GM12878 (cell line): ENCODE measurements at regions of chr1 and their contacts with region 1.

Region 1: GRCh38 chr1:78145105-78145580 is 99.4 kb downstream of the GIPC2 start:
- DNase-seq: no peak
- ATAC-seq: peak; percentile 85
- H3K4me3 ChIP-seq: no peak overlapping the region
- H3K27ac ChIP-seq: no peak overlapping the region
- H3K4me1 ChIP-seq: peaks cover 16% of the 10 kb centered on the region
- H3K27me3 ChIP-seq: no peaks in the 10 kb centered on the region
- CTCF ChIP-seq: peak; percentile 83 to 88 (median 87)
- EP300 ChIP-seq: no peak
- POLR2A ChIP-seq: no peak
- RAD21 ChIP-seq: peak; percentile 85

Region 2: DNA sequence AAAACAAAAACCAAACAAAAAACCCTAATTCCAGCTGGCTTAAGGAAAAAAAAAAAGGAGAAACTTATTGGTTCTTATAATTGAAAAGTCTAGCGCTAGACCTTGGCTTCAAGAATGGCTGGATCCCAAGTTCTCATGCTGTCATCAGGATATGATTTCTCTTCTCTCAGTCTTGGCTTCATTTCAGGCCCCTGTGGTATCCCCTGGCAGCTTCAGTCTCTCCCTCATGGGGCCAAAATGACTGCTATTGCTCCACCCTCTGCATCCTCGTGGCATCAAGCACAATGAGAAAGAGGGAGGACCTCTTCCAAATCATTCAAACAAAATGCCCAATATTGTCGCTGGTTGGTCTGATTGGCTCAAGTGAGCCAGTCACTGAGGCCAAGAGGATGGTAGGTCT is 18.6 kb before region 1 on chr1:
- CTCF ChIA-PET with region 1: interaction called, 112 read pairs
- POLR2A ChIA-PET with region 1: no interaction called
- RAD21 ChIA-PET with region 1: interaction called, 25 read pairs
- SMC1A ChIA-PET with region 1: interaction called, 37 read pairs
- in situ Hi-C with region 1: no loop called
- intact Hi-C with region 1: no loop called
- DNase-seq: no peak
- ATAC-seq: no peak
- H3K4me3 ChIP-seq: no peak overlapping the region
- H3K27ac ChIP-seq: no peak overlapping the region
- H3K4me1 ChIP-seq: no peaks in the 10 kb centered on the region
- H3K27me3 ChIP-seq: no peaks in the 10 kb centered on the region
- CTCF ChIP-seq: no peak
- EP300 ChIP-seq: no peak
- POLR2A ChIP-seq: no peak
- RAD21 ChIP-seq: no peak

Region 3: GRCh38 chr1:78156805-78157521 is 11.8 kb after region 1 on chr1:
- CTCF ChIA-PET with region 1: interaction called, 10 read pairs
- POLR2A ChIA-PET with region 1: interaction called, 3 read pairs
- RAD21 ChIA-PET with region 1: interaction called, 6 read pairs
- SMC1A ChIA-PET with region 1: interaction called, 3 read pairs
- in situ Hi-C with region 1: no loop called
- intact Hi-C with region 1: no loop called
- DNase-seq: no peak
- ATAC-seq: no peak
- H3K4me3 ChIP-seq: no peak overlapping the region
- H3K27ac ChIP-seq: no peak overlapping the region
- H3K4me1 ChIP-seq: no peaks in the 10 kb centered on the region
- H3K27me3 ChIP-seq: no peaks in the 10 kb centered on the region
- CTCF ChIP-seq: no peak
- EP300 ChIP-seq: no peak
- POLR2A ChIP-seq: no peak
- RAD21 ChIP-seq: no peak

Region 4: GRCh38 chr1:78601068-78601467 is 455.9 kb after region 1 on chr1:
- CTCF ChIA-PET with region 1: interaction called, 53 read pairs
- POLR2A ChIA-PET with region 1: no interaction called
- RAD21 ChIA-PET with region 1: interaction called, 12 read pairs
- SMC1A ChIA-PET with region 1: interaction called, 23 read pairs
- in situ Hi-C with region 1: no loop called
- intact Hi-C with region 1: no loop called
- DNase-seq: no peak
- ATAC-seq: no peak
- H3K4me3 ChIP-seq: no peak overlapping the region
- H3K27ac ChIP-seq: no peak overlapping the region
- H3K4me1 ChIP-seq: no peaks in the 10 kb centered on the region
- H3K27me3 ChIP-seq: no peaks in the 10 kb centered on the region
- CTCF ChIP-seq: no peak
- EP300 ChIP-seq: no peak
- POLR2A ChIP-seq: no peak
- RAD21 ChIP-seq: no peak

Region 5: DNA sequence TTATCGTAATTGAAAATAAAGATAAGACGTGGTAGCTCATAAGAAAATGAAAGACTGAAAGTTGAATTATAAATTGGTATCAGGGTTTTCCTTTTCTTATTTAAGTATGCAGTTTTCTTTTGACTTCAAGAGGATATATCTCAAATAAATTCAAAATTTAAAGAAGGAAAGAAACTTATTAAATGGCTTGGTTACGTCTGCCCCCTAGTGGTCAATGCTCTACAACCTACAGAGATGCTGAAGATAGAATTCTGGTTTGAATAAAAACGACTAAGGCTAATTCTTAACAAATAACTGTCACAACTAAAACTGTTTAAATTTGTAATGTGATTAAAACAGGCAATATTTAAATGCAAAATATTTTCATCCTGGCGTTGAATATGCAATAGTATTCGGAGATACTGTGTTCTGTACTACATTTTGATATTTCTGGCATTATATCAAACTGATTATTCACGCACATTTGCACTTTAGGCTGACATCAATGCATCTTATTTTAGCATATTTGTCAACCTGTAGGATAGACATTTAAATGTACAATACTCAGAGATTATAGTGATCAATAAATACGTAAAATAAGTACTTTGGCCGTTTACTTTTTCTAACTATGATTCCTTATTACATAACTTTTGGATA is 531.3 kb after region 1 on chr1:
- CTCF ChIA-PET with region 1: interaction called, 24 read pairs
- POLR2A ChIA-PET with region 1: no interaction called
- RAD21 ChIA-PET with region 1: interaction called, 7 read pairs
- SMC1A ChIA-PET with region 1: interaction called, 3 read pairs
- in situ Hi-C with region 1: loop called (anchors 5 kb)
- intact Hi-C with region 1: loop called (anchors 2 kb)
- DNase-seq: no peak
- ATAC-seq: peak; percentile 70
- H3K4me3 ChIP-seq: no peak overlapping the region
- H3K27ac ChIP-seq: no peak overlapping the region
- H3K4me1 ChIP-seq: peaks cover 11% of the 10 kb centered on the region
- H3K27me3 ChIP-seq: no peaks in the 10 kb centered on the region
- CTCF ChIP-seq: peak; percentile 54 to 76 (median 56)
- EP300 ChIP-seq: no peak
- POLR2A ChIP-seq: no peak
- RAD21 ChIP-seq: peak; percentile 86